Left ventricle myocardium superior (tissue), 1 donor: ENCODE measurements at regions of chr12 and their contacts with region 1.

Region 1: GRCh38 chr12:6195665-6196535 is 4.3 kb upstream of the CD9 start:
- DNase-seq: peak; percentile 86
- ATAC-seq: peak; percentile 84

Region 2: GRCh38 chr12:6285063-6285477 is 89.2 kb after region 1 on chr12:
- intact Hi-C with region 1: loop called (anchors 2 kb)
- DNase-seq: peak; percentile 55
- ATAC-seq: peak; percentile 89

Region 3: DNA sequence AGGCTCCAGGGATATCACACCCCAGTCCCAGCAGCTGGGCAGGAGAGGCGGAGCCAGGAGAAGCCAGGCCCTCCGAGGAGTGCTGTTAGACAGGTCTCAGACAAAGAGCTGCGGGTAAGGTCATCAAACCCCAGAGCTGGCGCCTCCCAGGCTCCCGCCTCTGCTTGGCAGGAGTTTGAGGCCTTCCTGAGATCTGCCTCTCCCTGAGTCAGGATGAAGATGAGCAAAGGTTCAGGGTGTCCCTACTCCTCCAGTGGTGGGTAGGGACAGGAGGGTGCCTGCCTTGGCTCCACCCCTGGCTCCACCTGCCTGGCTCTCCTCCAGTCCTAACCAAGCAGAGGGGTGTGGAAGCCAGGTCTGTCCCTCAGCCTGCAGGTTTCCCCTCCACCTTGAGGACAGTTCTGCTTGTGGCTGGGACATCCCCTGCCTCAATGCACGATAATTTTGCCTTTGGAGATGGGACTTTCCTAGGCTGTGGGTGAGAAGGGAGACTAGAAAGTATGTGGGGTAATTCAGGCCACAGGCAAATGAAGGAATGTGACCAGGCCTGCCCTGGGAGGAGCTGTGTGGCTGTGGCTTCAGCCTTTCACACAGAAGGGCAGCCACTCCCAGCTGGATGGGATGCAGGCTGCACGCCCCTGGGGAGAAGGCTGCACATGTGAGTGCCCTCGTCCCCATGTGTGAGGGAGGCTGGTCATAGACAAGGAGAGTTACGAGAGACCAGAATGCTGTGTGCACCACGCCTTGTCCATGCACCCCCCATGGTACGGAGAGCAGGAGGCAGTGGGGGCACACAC is 116.8 kb after region 1 on chr12:
- intact Hi-C with region 1: no loop called
- DNase-seq: peak; percentile 36
- ATAC-seq: no peak